HepG2 (cell line): ENCODE measurements at regions of chr1 and their contacts with region 1.

Region 1: GRCh38 chr1:231162297-231162969 is 575 bp downstream of the TRIM67 start:
- DNase-seq: peak; percentile 5
- ATAC-seq: peak; percentile 89
- H3K4me3 ChIP-seq: peak overlapping the region; percentile 26 to 72 (median 40); a peak in 5 of 6 replicates
- H3K27ac ChIP-seq: no peak overlapping the region
- H3K4me1 ChIP-seq: peaks cover 13% of the 10 kb centered on the region
- H3K27me3 ChIP-seq: peaks cover 0 to 23% of the 10 kb centered on the region in 2 experiments; a peak in 3 of 5 replicates
- CTCF ChIP-seq: peak; percentile 10; the same call in 1 of the 2 replicates
- EP300 ChIP-seq: no peak
- POLR2A ChIP-seq: no peak
- RAD21 ChIP-seq: peak; percentile 47; the same call in 1 of the 2 replicates

Region 2: DNA sequence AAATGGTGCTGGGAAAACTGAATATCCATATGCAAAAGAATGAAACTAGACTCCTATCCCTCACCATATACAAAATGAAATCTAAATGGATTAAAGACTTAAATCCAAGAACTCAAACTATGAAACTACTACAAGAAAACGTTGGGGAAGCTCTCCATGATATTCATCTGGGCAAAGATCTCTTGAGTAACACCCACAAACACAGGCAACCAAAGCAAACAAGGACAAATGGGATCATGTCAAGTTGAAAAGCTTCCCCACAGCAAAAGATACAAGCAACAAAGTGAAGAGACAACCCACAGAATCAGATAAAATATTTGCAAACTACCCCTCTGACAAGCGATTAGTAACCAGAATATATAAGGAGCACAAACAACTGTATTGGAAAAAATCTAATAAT is 197.5 kb before region 1 on chr1:
- CTCF ChIA-PET with region 1: no interaction called
- POLR2A ChIA-PET with region 1: no interaction called
- in situ Hi-C with region 1: no loop called
- intact Hi-C with region 1: loop called (anchors 5 kb)
- DNase-seq: peak; percentile 34
- ATAC-seq: peak; percentile 78
- H3K4me3 ChIP-seq: no peak overlapping the region
- H3K27ac ChIP-seq: no peak overlapping the region
- H3K4me1 ChIP-seq: peaks cover 28% of the 10 kb centered on the region
- H3K27me3 ChIP-seq: no peaks in the 10 kb centered on the region
- CTCF ChIP-seq: no peak
- EP300 ChIP-seq: peak in 1 of 2 experiments; percentile 42; a peak in 1 of 4 replicates
- POLR2A ChIP-seq: no peak
- RAD21 ChIP-seq: no peak

Region 3: GRCh38 chr1:231121533-231121932 is 40.9 kb before region 1 on chr1:
- CTCF ChIA-PET with region 1: no interaction called
- POLR2A ChIA-PET with region 1: no interaction called
- in situ Hi-C with region 1: no loop called
- intact Hi-C with region 1: no loop called
- DNase-seq: no peak
- ATAC-seq: no peak
- H3K4me3 ChIP-seq: no peak overlapping the region
- H3K27ac ChIP-seq: no peak overlapping the region
- H3K4me1 ChIP-seq: peaks cover 7% of the 10 kb centered on the region
- H3K27me3 ChIP-seq: peaks cover 0 to 6% of the 10 kb centered on the region in 2 experiments; a peak in 1 of 5 replicates
- CTCF ChIP-seq: no peak
- EP300 ChIP-seq: no peak
- POLR2A ChIP-seq: no peak
- RAD21 ChIP-seq: no peak

Region 4: GRCh38 chr1:231194843-231195516 is 32.5 kb after region 1 on chr1:
- CTCF ChIA-PET with region 1: no interaction called
- POLR2A ChIA-PET with region 1: no interaction called
- in situ Hi-C with region 1: no loop called
- intact Hi-C with region 1: loop called (anchors 1 kb)
- DNase-seq: peak; percentile 93
- ATAC-seq: peak; percentile 82
- H3K4me3 ChIP-seq: no peak overlapping the region
- H3K27ac ChIP-seq: no peak overlapping the region
- H3K4me1 ChIP-seq: peaks cover 42% of the 10 kb centered on the region
- H3K27me3 ChIP-seq: peaks cover under 1 to 38% of the 10 kb centered on the region in 2 experiments; a peak in 3 of 5 replicates
- CTCF ChIP-seq: no peak
- EP300 ChIP-seq: peak in 1 of 2 experiments; percentile 88; a peak in 2 of 4 replicates
- POLR2A ChIP-seq: no peak
- RAD21 ChIP-seq: no peak